Endothelial cell of umbilical vein (primary cell): ENCODE measurements at regions of chr3 and their contacts with region 1.

Region 1: GRCh38 chr3:183122257-183122932 is 23.1 kb upstream of the MCCC1 start:
- DNase-seq: peak; percentile 95
- H3K4me3 ChIP-seq: no peak overlapping the region
- H3K27ac ChIP-seq: peak overlapping the region; percentile 58
- H3K4me1 ChIP-seq: peaks cover 27% of the 10 kb centered on the region
- H3K27me3 ChIP-seq: peaks cover 3 to 4% of the 10 kb centered on the region in 2 experiments
- CTCF ChIP-seq: peak; percentile 56 to 66
- POLR2A ChIP-seq: no peak

Region 2: GRCh38 chr3:183094711-183095110 is 27.7 kb before region 1 on chr3:
- CTCF ChIA-PET with region 1: no interaction called
- POLR2A ChIA-PET with region 1: no interaction called
- dilution Hi-C with region 1: no loop called
- intact Hi-C with region 1: no loop called
- DNase-seq: no peak
- H3K4me3 ChIP-seq: no peak overlapping the region
- H3K27ac ChIP-seq: no peak overlapping the region
- H3K4me1 ChIP-seq: peaks cover 8% of the 10 kb centered on the region
- H3K27me3 ChIP-seq: no peaks in the 10 kb centered on the region
- CTCF ChIP-seq: no peak
- POLR2A ChIP-seq: no peak

Region 3: GRCh38 chr3:183161552-183162336 is 39.3 kb after region 1 on chr3:
- CTCF ChIA-PET with region 1: interaction called, 7 read pairs
- POLR2A ChIA-PET with region 1: no interaction called
- dilution Hi-C with region 1: no loop called
- intact Hi-C with region 1: loop called (anchors 5 kb)
- DNase-seq: no peak
- H3K4me3 ChIP-seq: peak overlapping the region in 2 of 3 experiments; percentile 31 to 72
- H3K27ac ChIP-seq: no peak overlapping the region
- H3K4me1 ChIP-seq: peaks cover 19% of the 10 kb centered on the region
- H3K27me3 ChIP-seq: no peaks in the 10 kb centered on the region
- CTCF ChIP-seq: no peak
- POLR2A ChIP-seq: no peak

Region 4: DNA sequence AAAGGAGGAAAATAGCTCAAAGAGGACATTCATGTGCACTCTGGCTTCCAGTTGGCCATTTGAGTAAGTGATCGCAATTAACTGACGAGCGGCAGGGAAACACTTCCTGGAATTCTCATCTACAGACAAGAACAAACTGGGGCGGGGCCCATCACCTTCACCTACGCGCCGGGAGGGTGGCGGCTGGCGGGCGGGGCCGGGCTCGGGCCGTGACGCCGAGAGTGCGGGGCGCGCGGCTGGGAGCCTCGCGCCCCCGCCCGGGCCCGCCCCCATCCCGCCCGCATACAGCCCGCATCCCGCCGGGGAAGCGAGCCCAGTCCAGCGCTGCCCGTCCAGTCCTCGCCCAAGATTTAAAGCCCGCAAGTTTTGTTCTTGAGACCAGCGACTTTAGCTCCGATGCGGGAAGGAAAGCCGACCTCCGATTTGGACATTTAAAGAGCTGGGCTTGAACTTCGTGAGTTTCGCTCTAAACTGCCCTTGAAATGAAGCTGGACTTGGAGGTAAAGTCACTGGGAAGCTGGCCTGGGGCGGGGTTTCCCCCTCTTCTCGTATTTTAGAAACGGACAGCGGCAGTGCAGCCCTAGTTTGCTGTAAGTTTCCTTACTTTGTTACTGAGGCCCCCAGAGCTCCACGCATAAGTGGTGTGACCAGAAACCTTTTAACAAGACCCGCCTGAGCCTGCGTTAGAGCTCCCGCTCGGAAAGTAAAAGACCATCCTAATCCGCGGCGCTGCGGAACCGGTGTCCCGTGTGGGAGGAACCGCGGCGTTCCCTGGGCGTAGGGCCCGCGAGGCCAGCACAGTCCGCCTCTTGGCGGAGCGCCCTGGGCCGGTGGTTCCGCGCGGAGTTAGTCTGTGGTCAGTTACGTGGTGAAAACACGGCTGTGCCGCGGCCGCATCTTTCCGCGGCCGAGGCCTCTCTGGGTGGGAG is 130.8 kb after region 1 on chr3 and contains the start of gene B3GNT5:
- CTCF ChIA-PET with region 1: interaction called, 4 read pairs
- POLR2A ChIA-PET with region 1: no interaction called
- dilution Hi-C with region 1: no loop called
- intact Hi-C with region 1: loop called (anchors 2 kb)
- DNase-seq: peak; percentile 71
- H3K4me3 ChIP-seq: peak within 1 kb of the TSS; percentile 51 to 75 (median 62)
- H3K27ac ChIP-seq: peak within 1 kb of the TSS; percentile 54
- H3K4me1 ChIP-seq: peaks cover 13% of the 10 kb centered on the region
- H3K27me3 ChIP-seq: no peaks in the 10 kb centered on the region
- CTCF ChIP-seq: no peak
- POLR2A ChIP-seq: no peak
- total RNA-seq, gene B3GNT5: 25.6 and 29.4 TPM in 2 replicates

Region 5: DNA sequence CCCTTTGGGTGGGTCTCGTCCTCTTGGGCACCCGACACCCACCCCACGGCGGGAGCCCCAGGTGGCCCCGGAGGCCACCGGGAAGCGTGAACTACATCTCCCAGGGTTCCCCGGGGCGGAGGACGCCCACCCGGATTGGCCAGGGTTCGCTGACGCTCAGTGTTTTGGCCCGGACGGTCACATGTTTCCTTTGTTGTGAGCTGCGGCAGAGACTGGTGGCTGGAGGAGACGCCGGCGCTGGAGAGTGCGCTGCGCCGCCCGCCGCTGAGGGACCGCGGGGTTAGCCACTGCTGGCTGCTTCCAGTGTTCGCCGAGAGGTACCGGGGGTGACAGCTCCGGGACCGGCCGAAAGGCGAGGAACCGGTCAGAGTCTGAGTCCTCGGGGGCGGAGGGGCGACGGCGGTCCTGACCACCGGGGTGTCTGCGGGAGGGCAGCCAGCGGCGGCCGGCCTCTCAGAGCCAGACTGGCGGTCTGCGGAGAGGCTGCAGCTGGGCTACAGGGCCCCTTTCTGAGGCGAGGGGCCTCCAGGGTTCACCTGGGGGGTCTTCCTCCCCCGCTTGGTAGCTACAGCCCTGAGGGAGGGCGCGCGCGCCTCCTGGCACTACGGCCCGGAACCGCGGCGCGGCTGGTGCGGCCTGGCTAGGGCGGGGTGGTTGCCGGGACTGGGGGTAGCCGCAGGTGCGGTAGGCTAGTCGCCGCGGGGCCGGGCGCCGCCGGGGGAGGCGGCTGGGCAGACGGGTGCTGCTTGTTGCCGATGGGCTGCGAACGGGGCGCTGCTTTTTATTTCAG is 513.2 kb after region 1 on chr3 and contains the start of gene KLHL24:
- CTCF ChIA-PET with region 1: no interaction called
- POLR2A ChIA-PET with region 1: no interaction called
- dilution Hi-C with region 1: no loop called
- intact Hi-C with region 1: loop called (anchors 5 kb)
- DNase-seq: peak; percentile 93
- H3K4me3 ChIP-seq: peak within 1 kb of the TSS; percentile 81 to 99 (median 84)
- H3K27ac ChIP-seq: peak within 1 kb of the TSS; percentile 89
- H3K4me1 ChIP-seq: peaks cover 19% of the 10 kb centered on the region
- H3K27me3 ChIP-seq: no peaks in the 10 kb centered on the region
- CTCF ChIP-seq: no peak
- POLR2A ChIP-seq: peak; percentile 41
- total RNA-seq, gene KLHL24: 45.8 and 46.2 TPM in 2 replicates